Posterior cingulate gyrus (tissue), 11 donors: ENCODE measurements at regions of chr10 and their contacts with region 1.

Region 1: GRCh38 chr10:78852466-78853240 is 216.1 kb upstream of the ZMIZ1 start:
- DNase-seq: peak in 1 of 10 donors; percentile 68

Region 2: DNA sequence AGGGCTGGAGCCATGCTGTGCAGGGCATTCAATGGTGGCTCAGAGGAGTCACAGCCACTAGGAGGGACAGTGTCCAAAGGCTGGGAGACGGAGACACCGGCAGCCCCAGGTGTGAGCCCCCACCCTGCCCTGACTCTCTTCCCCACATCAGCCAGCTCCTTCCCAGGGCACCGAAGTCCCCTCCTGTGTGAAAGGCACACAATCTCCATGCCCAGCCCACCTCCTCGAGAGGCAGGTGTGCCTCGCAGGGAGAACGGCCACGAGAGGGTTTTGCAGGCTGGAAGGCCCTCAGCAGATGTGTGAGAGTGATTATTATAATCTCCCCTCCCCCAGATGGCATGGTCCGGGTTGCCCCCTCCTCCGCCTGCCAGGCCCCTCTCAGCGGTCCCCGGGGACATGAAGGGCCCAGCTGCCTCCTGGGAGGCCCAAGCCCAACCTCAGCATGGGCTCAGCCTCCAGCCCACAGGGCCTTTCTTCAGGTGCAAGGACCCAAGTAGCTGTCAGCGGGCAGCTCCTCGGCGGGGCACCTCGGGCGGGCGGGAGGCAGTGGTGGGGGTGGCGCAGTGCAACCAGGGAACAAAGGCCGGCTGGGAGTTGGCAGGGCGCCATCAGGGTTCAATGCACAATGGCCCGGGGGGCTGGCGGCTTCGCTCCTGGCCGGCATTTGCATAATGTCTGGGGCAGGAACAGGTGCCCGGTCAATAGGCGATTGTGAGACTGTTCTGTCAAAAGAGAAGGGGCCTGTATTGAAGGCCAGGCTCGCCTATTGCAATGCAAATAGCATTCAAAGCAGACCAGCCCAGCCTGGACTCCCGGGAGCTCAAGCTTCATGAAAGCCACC is 60.8 kb after region 1 on chr10:
- intact Hi-C with region 1: loop called (anchors 5 kb)
- DNase-seq: peak; percentile 88 to 99 (median 94)

Region 3: DNA sequence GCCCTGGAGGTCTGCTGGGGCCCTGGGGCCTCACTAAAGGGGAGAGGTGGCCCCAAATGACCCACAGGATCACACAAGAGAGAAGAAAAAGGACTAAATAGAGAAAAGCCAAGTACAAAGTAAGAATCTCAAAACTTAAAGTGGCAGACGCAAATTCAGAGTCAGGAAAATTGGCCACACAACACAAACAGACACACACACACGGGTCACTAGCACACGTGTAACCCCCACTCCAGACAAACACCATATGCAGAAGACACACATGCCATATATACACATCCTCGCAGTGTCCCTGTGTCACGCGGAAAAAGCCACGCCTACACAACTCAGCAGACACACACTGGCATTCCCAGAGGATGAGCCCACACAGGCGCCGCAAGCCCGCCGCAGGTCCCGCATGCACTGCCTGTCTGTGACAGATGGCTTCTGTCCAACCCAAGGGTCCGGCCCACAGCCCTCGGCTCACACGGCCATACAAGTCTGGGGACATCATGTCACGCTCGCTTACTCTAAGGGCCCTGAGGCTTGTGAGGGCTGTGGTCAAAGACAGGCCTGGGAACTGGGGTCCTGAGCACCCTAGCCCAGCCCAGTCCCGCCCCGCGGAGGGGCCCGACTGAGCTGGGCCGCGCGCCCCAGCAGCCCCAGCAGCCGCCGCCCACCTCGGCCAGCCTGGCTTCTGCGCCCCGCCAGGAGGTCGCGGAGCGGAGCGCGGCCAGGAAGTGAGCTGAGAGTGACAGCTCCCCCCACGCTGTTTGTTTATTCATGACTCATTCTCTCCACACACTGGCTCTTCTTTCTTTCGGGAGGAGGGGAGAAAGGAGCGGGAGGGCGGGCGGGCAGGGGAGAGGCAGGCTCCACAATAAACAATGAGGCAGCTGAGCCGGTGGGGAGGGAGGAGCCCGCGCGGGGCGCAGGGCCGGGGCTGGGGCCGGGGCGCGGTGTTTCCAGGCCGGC is 120.6 kb after region 1 on chr10:
- intact Hi-C with region 1: loop called (anchors 2 kb)
- DNase-seq: peak; percentile 71 to 97 (median 81)

Region 4: GRCh38 chr10:79068562-79069324 is 216.1 kb after region 1 on chr10 and contains the start of gene ZMIZ1:
- intact Hi-C with region 1: loop called (anchors 10 kb)
- DNase-seq: peak; percentile 75 to 97 (median 84)